CD8-positive, alpha-beta memory T cell (primary cell): ENCODE measurements at regions of chr1 and their contacts with region 1.

Region 1: GRCh38 chr1:172398970-172399755 is 21.3 kb upstream of the C1orf105 start:
- DNase-seq: peak in 2 of 5 donors; percentile 21 to 39
- H3K4me3 ChIP-seq: peak overlapping the region; percentile 16
- H3K4me3 Mint-ChIP-seq: peak overlapping the region in 6 of 7 donors; percentile 22 to 82 (median 54)
- H3K27ac ChIP-seq: no peak overlapping the region
- H3K27ac Mint-ChIP-seq: peak overlapping the region in 5 of 8 donors; percentile 1 to 83 (median 29)
- H3K4me1 ChIP-seq: peaks cover 44% of the 10 kb centered on the region
- H3K4me1 Mint-ChIP-seq: peaks cover 54 to 75% (median 66%) of the 10 kb centered on the region in 3 donors
- H3K27me3 ChIP-seq: no peaks in the 10 kb centered on the region
- H3K27me3 Mint-ChIP-seq: no peaks in the 10 kb centered on the region

Region 2: DNA sequence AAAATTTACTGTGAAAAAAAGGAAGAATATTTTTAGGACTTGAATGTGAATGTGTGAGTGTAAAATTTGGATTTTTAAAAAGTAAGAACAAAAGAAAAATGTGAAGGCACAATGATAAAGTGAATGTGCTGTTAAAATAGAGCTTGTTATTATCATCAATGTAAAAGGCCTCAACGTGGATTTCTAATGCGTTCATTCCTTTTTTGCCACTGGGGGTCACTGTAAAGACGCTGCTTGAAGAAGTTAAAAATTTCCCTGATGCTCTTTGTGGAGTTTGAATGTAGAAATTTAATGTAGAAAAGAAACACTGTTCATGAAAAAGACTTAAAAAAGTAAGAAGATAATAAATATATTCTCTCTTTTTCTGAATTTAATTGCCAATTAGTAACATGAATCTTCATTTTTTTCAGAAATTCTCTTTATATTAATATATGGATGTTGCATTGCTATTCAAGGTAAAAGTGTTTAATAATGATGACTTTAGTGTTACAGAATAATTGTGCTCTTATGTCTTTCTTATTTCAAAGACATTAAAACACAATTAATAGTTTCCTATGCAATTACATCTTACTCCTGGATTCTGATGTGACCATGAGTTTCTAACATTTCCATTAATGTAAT is 396.3 kb before region 1 on chr1:
- CTCF ChIA-PET with region 1: interaction called, 12 read pairs
- POLR2A ChIA-PET with region 1: no interaction called
- DNase-seq: peak in 2 of 5 donors; percentile 10 to 31
- H3K4me3 ChIP-seq: no peak overlapping the region
- H3K4me3 Mint-ChIP-seq: no peak overlapping the region
- H3K27ac ChIP-seq: no peak overlapping the region
- H3K27ac Mint-ChIP-seq: no peak overlapping the region
- H3K4me1 ChIP-seq: no peaks in the 10 kb centered on the region
- H3K4me1 Mint-ChIP-seq: peaks cover 3 to 19% (median 16%) of the 10 kb centered on the region in 3 donors
- H3K27me3 ChIP-seq: no peaks in the 10 kb centered on the region
- H3K27me3 Mint-ChIP-seq: no peaks in the 10 kb centered on the region

Region 3: DNA sequence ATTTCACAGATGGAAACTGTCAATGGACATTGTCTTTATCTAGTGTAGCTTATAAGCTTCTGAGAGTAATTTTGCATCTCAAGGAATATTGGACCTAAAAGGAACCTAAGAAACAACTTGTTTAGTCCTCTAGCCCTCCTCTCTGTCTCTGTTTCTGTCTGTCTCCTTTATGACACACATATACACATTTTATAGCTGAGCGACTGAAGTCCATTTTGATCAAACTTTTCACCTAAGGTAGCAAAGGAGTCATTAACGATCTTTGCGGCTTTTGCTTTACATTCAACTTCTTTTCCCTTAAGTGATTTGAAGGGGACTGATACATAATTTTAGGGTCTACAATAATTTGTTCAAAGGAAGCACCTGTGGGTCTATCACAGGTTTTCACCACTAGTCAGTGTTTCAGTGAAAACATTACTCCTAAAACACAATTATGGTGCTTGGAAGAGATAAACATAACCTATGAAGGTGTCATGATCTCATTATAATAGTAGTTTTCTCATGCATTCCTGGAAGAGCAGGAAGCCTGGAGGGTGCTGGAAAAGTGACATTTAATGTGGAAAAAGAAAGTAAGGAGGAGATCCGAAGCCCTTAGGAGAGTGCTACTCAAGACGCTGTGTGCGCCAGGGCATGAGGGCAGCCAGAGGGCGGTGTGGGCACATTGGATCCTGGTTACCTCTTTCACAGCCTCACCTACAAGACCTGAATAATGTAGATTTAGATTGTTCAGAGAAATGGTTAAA is 309.2 kb before region 1 on chr1:
- CTCF ChIA-PET with region 1: interaction called, 10 read pairs
- POLR2A ChIA-PET with region 1: no interaction called
- DNase-seq: peak; percentile 29 to 68 (median 42)
- H3K4me3 ChIP-seq: no peak overlapping the region
- H3K4me3 Mint-ChIP-seq: no peak overlapping the region
- H3K27ac ChIP-seq: no peak overlapping the region
- H3K27ac Mint-ChIP-seq: peak overlapping the region in 1 of 8 donors; percentile 63
- H3K4me1 ChIP-seq: no peaks in the 10 kb centered on the region
- H3K4me1 Mint-ChIP-seq: peaks cover 4 to 6% (median 4%) of the 10 kb centered on the region in 3 donors
- H3K27me3 ChIP-seq: no peaks in the 10 kb centered on the region
- H3K27me3 Mint-ChIP-seq: peaks cover 0 to 3% of the 10 kb centered on the region in 2 donors

Region 4: DNA sequence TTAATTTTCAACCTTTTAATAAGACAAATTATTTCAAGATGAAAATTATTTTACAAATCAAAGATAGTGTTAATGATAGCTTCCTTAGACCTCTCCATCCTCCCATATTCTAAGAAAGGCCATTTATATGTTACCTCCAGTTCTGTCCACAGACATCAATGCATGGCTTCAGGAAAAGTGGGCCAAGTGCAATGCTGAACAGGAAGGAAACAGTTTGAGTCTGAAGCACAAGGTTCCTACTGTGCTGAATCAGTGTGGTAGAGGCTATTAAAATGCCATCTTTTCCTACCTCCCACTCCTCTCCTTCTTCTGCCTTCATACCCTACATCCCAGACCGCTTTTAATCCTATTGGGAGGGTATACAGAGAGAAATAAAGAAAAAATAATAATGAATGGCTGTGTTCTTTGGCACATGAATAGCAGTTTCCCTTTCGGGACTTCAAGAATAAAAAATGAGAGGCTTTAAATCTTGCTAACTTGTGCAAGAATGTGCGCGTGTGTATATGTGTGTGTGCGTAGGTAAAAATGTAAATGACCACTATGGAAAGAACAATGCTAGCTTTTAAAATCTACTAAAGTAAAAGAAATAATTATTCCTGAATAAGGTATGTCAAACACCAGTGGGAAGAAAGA is 41.3 kb before region 1 on chr1:
- CTCF ChIA-PET with region 1: interaction called, 13 read pairs
- POLR2A ChIA-PET with region 1: interaction called, 3 read pairs
- DNase-seq: peak in 1 of 5 donors; percentile 1
- H3K4me3 ChIP-seq: no peak overlapping the region
- H3K4me3 Mint-ChIP-seq: peak overlapping the region; percentile 65 to 88 (median 78)
- H3K27ac ChIP-seq: no peak overlapping the region
- H3K27ac Mint-ChIP-seq: peak overlapping the region; percentile 58 to 94 (median 93)
- H3K4me1 ChIP-seq: peaks cover 40% of the 10 kb centered on the region
- H3K4me1 Mint-ChIP-seq: peaks cover 20 to 51% (median 26%) of the 10 kb centered on the region in 3 donors
- H3K27me3 ChIP-seq: no peaks in the 10 kb centered on the region
- H3K27me3 Mint-ChIP-seq: no peaks in the 10 kb centered on the region